CD14-positive monocyte (primary cell): ENCODE measurements at regions of chr9 and their contacts with region 1.

Region 1: GRCh38 chr9:15306757-15307534 is at the start of gene TTC39B:
- DNase-seq: peak; percentile 73 to 82 (median 78)
- H3K4me3 ChIP-seq: peak within 1 kb of the TSS; percentile 67 to 97 (median 75)
- H3K4me3 Mint-ChIP-seq: peak within 1 kb of the TSS; percentile 98 to 99
- H3K27ac ChIP-seq: peak within 1 kb of the TSS in 1 of 2 donors; percentile 74
- H3K27ac Mint-ChIP-seq: peak within 1 kb of the TSS; percentile 11 to 96 (median 82)
- H3K4me1 ChIP-seq: peaks cover 14 to 37% of the 10 kb centered on the region in 2 donors
- H3K4me1 Mint-ChIP-seq: peaks cover 31% of the 10 kb centered on the region
- H3K27me3 ChIP-seq: peaks cover 0 to 9% of the 10 kb centered on the region in 2 donors
- H3K27me3 Mint-ChIP-seq: peaks cover 2 to 16% (median 10%) of the 10 kb centered on the region in 3 donors
- CTCF ChIP-seq: no peak
- polyA plus RNA-seq, gene TTC39B: 0.87 to 5.3 (median 3.1) TPM

Region 2: DNA sequence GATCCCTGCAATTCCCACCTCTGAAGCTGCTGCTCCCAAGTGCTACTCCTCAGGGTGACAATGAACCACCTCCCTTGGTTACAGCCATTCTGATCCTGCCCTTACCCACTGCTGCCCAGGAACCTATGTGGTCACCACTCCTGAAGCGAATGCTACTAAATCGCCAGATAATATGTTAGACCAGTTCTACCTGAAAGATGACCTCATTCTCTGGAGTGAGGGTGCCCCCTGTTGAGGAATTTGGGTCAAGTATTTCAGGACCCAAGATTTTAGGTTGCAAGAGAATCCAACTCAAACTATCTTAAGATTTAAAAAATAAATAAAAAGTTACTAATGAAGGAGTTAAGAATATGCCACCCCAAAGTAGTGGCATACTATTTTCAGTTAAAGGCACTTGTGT is 109.9 kb after region 1 on chr9:
- intact Hi-C with region 1: loop called in 1 of 2 experiments (anchors 10 kb)
- DNase-seq: peak in 1 of 3 donors; percentile 10
- H3K4me3 ChIP-seq: no peak overlapping the region
- H3K4me3 Mint-ChIP-seq: no peak overlapping the region
- H3K27ac ChIP-seq: no peak overlapping the region
- H3K27ac Mint-ChIP-seq: peak overlapping the region in 2 of 7 donors; percentile 26 to 61
- H3K4me1 ChIP-seq: peaks cover 0 to under 1% of the 10 kb centered on the region in 2 donors
- H3K4me1 Mint-ChIP-seq: peaks cover 2% of the 10 kb centered on the region
- H3K27me3 ChIP-seq: no peaks in the 10 kb centered on the region
- H3K27me3 Mint-ChIP-seq: peaks cover 0 to 4% (median 1%) of the 10 kb centered on the region in 3 donors
- CTCF ChIP-seq: peak; percentile 34